Endothelial cell of umbilical vein (primary cell): ENCODE measurements at regions of chr12 and their contacts with region 1.

Region 1: DNA sequence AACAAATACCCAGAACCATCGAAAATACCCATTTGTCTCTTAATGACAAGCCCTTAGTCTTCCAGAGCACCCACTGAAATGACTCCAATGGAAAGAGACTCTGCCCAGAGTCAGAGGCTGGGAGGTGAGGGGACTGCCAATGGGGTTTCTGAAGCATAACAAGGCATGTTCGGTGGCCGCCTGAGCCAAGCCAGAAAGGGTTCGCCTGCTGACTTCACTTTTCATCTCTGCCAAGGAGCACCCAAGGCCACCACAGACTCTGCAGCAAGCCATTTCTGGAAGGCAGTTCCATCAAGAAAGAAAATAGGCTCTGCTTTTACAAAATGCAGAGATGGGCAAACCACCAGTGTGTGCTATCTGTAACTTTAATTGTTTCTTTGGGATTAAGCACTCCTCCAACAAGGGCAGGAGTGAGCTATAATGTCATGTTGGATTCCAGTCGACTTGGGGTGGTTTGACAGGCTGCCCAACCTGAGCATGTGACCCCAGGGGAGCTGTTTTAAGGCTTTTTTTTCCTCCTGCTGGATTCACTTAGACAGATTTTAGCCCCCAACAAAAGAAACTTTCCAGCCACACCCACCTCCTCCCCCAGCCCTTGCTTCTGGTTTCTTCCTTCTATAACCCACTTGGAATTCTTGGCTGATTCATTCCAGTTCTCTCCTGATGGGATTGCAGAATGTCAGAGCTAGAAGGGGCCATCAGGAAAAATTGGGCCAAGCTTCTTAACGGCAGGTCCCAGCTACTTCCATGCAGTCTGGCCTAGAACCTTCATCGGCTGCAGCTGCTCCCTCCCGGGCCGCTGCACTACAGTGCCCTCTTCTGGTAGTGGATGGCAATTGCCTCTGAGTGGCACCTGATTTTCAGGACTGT is 24.1 kb downstream of the CKAP4 start:
- DNase-seq: peak; percentile 75
- H3K4me3 ChIP-seq: no peak overlapping the region
- H3K27ac ChIP-seq: no peak overlapping the region
- H3K4me1 ChIP-seq: no peaks in the 10 kb centered on the region
- H3K27me3 ChIP-seq: peaks cover 9 to 13% of the 10 kb centered on the region in 2 experiments
- CTCF ChIP-seq: peak; percentile 89 to 93
- POLR2A ChIP-seq: no peak

Region 2: DNA sequence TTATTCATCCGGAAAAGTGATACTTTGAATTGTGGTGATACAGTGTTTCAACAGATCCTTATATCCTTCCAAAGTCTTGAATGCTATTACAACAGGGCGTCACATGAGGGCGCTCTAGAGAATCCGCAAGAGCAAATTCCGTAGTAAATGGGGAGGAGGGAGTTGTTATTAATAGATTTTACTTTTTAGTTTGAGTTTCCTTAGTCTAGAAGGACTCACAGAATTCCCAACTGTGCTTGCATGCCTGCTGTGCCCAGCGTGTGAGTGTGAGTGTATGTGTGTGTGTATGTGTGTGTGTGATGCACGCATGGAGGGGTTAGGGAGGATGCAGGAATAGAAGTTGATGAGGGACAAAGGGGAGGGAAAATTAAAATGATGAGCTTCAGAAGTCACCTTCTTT is 518.0 kb before region 1 on chr12:
- CTCF ChIA-PET with region 1: interaction called, 16 read pairs
- POLR2A ChIA-PET with region 1: no interaction called
- dilution Hi-C with region 1: no loop called
- intact Hi-C with region 1: loop called (anchors 1 kb)
- DNase-seq: peak; percentile 77
- H3K4me3 ChIP-seq: no peak overlapping the region
- H3K27ac ChIP-seq: no peak overlapping the region
- H3K4me1 ChIP-seq: peaks cover 9% of the 10 kb centered on the region
- H3K27me3 ChIP-seq: peaks cover 4 to 7% of the 10 kb centered on the region in 2 experiments
- CTCF ChIP-seq: peak; percentile 63 to 65
- POLR2A ChIP-seq: no peak

Region 3: GRCh38 chr12:106282457-106283097 is 58.9 kb after region 1 on chr12:
- CTCF ChIA-PET with region 1: interaction called, 224 read pairs
- POLR2A ChIA-PET with region 1: no interaction called
- dilution Hi-C with region 1: no loop called
- intact Hi-C with region 1: loop called (anchors 1 kb)
- DNase-seq: peak; percentile 48
- H3K4me3 ChIP-seq: no peak overlapping the region
- H3K27ac ChIP-seq: no peak overlapping the region
- H3K4me1 ChIP-seq: peaks cover 6% of the 10 kb centered on the region
- H3K27me3 ChIP-seq: peaks cover 4 to 9% of the 10 kb centered on the region in 2 experiments
- CTCF ChIP-seq: peak; percentile 65 to 70
- POLR2A ChIP-seq: no peak

Region 4: DNA sequence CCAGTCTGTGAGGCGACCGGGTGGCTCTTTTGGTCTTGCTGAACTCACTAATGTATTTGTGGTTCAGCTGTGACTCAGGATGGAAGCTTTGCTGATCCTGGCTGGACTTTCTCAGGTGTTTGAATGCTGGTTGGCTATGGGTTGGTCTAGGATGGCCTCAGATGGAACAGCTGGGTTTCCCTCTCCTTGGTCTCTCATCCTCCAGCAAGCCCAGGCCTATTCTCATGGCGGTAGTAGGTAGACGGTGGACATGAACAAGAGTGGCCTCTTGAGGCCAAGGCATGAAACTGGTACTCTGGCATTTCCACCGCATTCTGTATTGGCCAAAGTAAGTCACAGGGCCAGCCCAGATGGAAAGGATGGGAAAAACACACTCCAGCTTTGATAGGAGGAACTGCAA is 122.0 kb after region 1 on chr12:
- CTCF ChIA-PET with region 1: interaction called, 38 read pairs
- POLR2A ChIA-PET with region 1: no interaction called
- dilution Hi-C with region 1: no loop called
- intact Hi-C with region 1: loop called (anchors 1 kb)
- DNase-seq: peak; percentile 67
- H3K4me3 ChIP-seq: no peak overlapping the region
- H3K27ac ChIP-seq: no peak overlapping the region
- H3K4me1 ChIP-seq: no peaks in the 10 kb centered on the region
- H3K27me3 ChIP-seq: peaks cover 3 to 5% of the 10 kb centered on the region in 2 experiments
- CTCF ChIP-seq: peak; percentile 33 to 54
- POLR2A ChIP-seq: no peak